Ovary (tissue), 10 donors: ENCODE measurements at regions of chr1 and their contacts with region 1.

Region 1: DNA sequence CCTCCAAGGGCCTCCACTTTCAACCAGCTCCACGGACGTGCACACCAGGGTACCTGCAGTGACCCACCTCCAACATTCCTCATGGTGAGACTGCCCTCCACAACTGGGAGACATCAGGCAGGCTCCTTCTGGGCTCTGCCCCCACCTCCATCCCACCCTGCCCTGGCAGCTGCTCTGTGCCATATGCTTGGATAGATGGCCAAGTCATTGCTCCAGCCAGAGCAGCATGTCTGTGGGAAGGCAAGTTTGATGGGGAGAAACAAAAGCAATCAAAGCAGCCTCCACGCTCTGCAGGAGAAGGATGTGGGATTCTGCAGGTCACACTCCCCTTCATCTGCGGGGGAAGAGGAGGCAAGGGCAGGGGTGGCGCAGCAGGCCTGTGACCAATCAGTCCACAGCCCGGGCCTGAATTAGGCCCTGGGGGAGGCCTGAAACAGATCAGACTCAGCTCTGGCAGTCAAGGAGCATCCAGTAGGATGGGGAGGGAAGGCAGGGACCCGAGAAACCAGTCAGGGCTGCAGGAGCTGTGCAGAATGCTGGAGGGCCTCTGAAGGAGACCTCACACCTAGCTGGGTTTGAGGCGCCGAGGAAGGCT is 12.9 kb downstream of the TNNT2 start:
- DNase-seq: no peak
- H3K4me3 ChIP-seq: no peak overlapping the region
- H3K27ac ChIP-seq: no peak overlapping the region
- H3K4me1 ChIP-seq: no peaks in the 10 kb centered on the region
- H3K27me3 ChIP-seq: no peaks in the 10 kb centered on the region
- CTCF ChIP-seq: no peak
- EP300 ChIP-seq: no peak
- POLR2A ChIP-seq: no peak

Region 2: DNA sequence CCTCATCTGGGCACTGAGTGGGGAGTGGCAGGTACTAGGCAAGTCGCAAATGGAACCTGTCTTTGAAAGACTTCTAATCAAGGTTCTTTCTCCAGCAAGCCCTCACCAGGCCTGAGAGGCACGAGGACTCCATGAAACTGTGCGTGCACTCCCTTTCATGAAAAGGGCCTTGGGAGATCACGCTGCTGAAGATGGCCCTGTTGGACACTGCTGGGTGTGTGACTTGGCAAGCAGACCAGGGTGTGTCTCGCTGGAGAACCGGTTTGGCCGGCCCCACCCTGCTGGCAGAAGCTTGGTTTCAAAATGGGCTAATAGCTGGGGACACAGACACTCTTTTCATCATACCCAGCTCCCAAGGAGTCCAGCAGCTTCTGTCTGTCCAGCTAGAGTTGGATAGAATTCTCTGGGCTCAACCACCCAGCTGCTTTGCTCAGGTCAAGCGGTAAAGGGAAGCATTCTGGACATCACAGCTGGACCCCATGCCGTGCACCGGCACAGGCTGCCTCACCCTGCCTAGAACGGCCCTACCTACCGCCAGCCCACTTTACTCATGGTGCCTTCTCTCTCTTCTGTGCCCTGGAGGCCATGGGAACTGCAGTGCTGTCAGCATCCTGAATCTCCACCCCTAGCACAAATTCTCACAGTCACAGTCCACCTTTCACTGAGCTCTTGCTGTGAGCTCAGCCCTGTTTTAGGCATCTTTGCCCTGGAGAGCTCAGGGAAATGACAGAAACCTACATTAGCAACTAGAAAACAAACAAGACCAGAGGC is 56.7 kb before region 1 on chr1:
- intact Hi-C with region 1: loop called in 1 of 4 experiments (anchors 2 kb)
- DNase-seq: no peak
- H3K4me3 ChIP-seq: no peak overlapping the region
- H3K27ac ChIP-seq: no peak overlapping the region
- H3K4me1 ChIP-seq: no peaks in the 10 kb centered on the region
- H3K27me3 ChIP-seq: no peaks in the 10 kb centered on the region
- CTCF ChIP-seq: no peak
- EP300 ChIP-seq: no peak
- POLR2A ChIP-seq: no peak